ENCODE measurements at regions of chr10 and their contacts with region 1.

Region 1: GRCh38 chr10:132452631-132453469 is 55.9 kb downstream of the PWWP2B start:
- DNase-seq: peak; percentile 92
- ATAC-seq: peak; percentile 86

Region 2: DNA sequence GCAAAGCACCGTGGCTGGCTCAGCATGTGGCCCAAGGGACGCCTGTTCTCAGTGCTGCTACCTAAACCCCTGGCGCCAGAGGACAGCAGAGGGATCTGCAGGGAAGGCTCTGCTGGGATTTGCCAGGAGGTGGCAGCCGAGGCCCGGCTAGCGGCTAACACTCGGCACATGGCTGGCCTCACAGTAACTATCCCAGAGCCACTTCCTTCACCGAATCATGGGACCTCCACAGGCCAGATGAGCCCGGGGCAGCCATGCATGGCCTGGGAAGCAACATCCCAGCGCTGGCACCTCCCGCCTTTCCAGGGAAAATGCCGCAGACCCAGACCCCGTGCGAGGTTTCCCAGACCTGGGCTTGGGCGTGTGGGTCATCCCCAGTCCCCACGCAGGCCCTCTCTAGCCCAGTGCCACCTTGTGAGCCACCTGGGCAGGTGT is 229.7 kb before region 1 on chr10:
- intact Hi-C with region 1: loop called (anchors 10 kb)
- DNase-seq: peak; percentile 88
- ATAC-seq: peak; percentile 97

Region 3: DNA sequence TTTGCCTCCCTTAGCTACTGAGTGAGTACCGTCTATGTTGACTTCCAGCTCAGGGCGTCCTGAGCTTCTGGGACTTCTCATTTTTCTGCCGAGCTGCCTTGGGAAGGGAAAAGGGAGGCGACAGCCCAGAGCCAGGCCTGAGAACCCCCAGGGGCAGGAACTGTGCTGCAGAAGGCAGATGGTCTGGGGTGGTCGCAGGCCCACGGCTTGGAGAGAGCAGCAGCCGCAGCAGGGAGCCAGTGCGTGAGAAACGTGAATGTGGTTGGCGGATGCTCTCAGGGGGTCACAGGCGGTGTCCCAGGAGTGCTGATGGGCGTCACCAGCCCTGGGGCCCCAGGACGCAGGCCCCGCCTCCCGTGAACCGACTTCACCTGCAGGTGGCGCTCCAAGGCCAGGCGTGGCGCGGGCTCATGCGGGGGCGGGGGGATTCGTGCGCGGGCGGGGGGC is 65.1 kb before region 1 on chr10:
- intact Hi-C with region 1: loop called (anchors 10 kb)
- DNase-seq: peak; percentile 85
- ATAC-seq: peak; percentile 73